Left cardiac atrium (tissue), 4 donors: ENCODE measurements at regions of chr1 and their contacts with region 1.

Region 1: GRCh38 chr1:172745014-172745413 is 86.1 kb downstream of the FASLG start:
- DNase-seq: no peak
- ATAC-seq: peak; percentile 84 to 88

Region 2: DNA sequence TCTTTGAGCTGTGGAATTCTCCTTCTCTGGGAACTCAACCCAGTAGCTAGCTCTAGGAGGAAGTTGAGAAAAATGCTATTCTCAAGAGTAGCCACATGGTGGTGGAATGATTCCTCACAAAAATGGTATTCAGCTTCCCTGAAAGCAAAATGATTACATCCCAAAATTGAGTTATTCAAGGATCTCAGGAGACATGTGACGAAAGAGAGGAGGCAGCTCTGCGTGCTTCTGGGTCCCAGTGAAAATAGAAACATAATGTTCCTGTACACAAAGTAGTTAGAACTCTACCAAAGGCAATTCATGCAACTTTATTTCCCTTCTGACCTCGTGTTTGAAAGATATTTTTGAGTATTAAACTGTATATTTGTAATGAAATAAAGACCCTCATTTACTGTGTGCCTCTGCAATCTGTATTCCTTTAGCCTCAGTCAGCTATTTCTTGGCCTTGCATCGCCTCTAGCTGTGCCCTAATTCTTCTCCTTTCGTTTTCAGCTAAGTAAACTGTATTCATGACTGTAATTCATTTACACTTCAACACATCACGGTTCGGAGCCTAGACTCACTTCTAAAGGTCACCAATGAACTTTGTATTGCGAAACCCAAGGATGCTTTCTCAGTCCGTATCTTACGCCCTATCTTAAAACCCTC is 81.2 kb after region 1 on chr1:
- intact Hi-C with region 1: loop called in 1 of 2 experiments (anchors 5 kb)
- DNase-seq: no peak
- ATAC-seq: peak; percentile 85 to 90

Region 3: DNA sequence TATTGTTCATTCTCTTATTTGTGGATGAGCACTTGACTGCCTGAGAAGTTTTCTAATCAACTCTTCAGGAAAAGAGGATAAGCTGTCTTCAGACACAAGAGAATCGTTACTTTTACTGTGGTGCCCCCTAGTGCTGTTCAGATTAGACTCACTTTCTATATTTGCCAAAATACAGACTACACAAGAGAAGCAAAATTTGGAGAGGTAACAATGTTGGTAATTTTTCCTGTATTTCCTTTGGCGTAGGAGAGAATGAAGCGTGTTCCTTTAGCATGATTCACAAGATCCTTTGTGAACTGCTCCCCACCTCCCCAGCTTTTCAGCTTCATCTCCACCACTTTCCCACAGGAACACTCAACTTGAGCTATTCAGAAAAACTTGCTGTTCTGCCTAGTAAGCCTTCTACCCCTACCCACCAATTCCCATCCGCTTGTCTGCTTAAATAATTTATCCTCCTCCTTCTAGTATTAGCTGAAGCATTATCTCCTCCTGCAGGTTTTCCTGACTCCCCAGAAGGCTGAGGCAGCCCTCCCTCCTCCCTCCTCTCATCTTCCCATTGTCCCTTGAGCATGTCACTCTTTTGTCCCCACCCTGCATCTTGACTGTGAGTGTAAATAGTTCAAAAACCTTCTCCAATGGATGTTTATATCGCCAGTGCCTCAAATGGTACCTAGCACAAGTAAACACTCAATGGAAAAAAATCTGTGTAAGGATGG is 457.6 kb after region 1 on chr1:
- intact Hi-C with region 1: loop called in 1 of 2 experiments (anchors 2 kb)
- DNase-seq: no peak
- ATAC-seq: peak; percentile 69 to 74

Region 4: DNA sequence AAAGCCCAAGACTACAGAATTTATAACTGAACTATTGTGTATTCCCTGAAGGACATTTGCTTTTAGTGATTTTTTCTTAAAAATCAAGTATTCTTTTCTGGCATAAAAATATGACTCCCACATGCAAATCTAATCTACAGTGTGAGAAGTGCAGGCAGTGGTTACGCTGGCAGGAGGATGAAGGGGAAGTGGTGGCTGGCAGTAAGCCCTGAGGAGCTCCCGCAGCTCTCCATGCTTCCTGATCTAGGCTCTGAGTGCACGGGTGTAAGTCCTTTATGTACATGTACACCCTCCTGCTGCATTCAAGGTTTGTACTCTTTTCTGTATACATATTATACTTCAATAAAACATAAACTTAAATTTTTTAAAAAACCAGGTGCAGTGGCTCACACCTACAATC is 664.6 kb after region 1 on chr1:
- intact Hi-C with region 1: loop called in 1 of 2 experiments (anchors 10 kb)
- DNase-seq: peak; percentile 61
- ATAC-seq: peak; percentile 59 to 84

Region 5: GRCh38 chr1:173429471-173430402 is 684.7 kb after region 1 on chr1:
- intact Hi-C with region 1: loop called in 1 of 2 experiments (anchors 10 kb)
- DNase-seq: peak; percentile 95
- ATAC-seq: peak; percentile 95 to 99